Heart left ventricle (tissue), 16 donors: ENCODE measurements at regions of chr11 and their contacts with region 1.

Region 1: GRCh38 chr11:109960831-109961230 is 132.4 kb upstream of the ZC3H12C start:
- DNase-seq: peak; percentile 31 to 77 (median 44)
- ATAC-seq: peak; percentile 85 to 95 (median 88)
- H3K4me3 ChIP-seq: no peak overlapping the region
- H3K27ac ChIP-seq: peak overlapping the region in 2 of 12 donors; percentile 8 to 35
- H3K4me1 ChIP-seq: peaks cover 0 to 10% (median 0%) of the 10 kb centered on the region in 12 donors
- H3K27me3 ChIP-seq: no peaks in the 10 kb centered on the region
- CTCF ChIP-seq: no peak
- POLR2A ChIP-seq: no peak

Region 2: DNA sequence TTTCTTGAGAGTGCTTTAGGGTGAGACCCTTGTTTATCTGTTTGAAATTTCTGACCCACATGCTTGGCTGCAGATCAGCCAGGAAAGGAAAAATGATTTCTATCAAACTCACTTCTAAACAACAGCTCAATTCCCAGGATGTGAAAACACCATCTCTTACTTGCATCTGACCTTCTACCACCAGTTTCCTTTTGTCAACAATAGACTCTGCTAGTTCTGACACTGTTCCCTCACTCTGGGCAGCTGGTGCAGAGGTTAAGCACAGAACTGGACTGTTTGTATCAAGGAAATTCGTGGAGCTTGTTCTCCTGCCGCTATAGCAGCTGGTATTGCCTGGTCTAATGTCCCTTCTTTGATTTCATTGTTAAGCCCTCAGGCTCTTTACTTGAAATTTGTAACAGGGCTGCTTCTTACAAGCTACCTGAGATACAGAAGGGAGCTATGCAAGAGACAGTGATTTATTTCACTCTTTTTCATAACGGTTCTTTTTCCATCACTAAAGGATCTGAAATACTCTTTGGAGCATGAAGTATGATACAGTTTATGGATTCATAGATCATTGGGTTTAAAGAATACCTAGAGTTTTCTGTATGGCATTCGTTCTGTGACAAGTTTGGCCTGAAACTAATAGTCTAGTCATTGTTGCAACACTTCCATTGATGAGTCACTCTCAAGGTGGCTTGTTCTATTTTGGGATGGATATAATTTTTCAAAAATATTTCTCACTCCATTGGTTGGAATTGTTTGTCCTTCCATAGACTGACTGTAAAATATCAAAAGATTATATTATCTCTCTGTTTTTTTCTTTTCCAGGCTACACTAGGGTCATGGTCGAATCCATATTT is 45.8 kb before region 1 on chr11:
- intact Hi-C with region 1: no loop called
- DNase-seq: no peak
- ATAC-seq: no peak
- H3K4me3 ChIP-seq: no peak overlapping the region
- H3K27ac ChIP-seq: no peak overlapping the region
- H3K4me1 ChIP-seq: peaks cover 0 to 3% (median 0%) of the 10 kb centered on the region in 12 donors
- H3K27me3 ChIP-seq: no peaks in the 10 kb centered on the region
- CTCF ChIP-seq: no peak
- POLR2A ChIP-seq: no peak

Region 3: GRCh38 chr11:110074499-110074898 is 113.7 kb after region 1 on chr11:
- intact Hi-C with region 1: no loop called
- DNase-seq: no peak
- ATAC-seq: no peak
- H3K4me3 ChIP-seq: no peak overlapping the region
- H3K27ac ChIP-seq: no peak overlapping the region
- H3K4me1 ChIP-seq: peaks cover 0 to 30% (median 8%) of the 10 kb centered on the region in 12 donors
- H3K27me3 ChIP-seq: no peaks in the 10 kb centered on the region
- CTCF ChIP-seq: no peak
- POLR2A ChIP-seq: no peak

Region 4: DNA sequence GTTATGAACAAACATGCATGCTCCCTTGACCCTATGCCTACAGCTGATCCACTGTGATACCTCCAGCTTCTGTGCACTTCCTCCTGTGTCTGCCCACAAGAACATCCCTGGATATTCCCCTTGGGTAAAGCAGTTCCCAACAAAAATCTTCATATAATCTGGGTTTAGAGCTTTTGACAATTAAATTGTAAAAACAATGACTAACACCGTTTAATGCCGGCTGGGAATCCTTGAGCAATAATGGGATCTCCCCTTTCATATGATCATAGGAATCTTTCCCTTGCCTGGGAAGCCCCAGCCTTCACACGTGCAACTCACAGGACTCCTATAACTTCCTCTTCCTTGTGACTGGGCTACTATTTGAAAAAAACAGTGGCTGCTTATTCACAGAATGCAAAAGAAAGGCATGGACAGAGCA is 126.1 kb after region 1 on chr11:
- intact Hi-C with region 1: loop called in 1 of 10 experiments (anchors 10 kb)
- DNase-seq: no peak
- ATAC-seq: peak in 1 of 4 donors; percentile 49
- H3K4me3 ChIP-seq: no peak overlapping the region
- H3K27ac ChIP-seq: no peak overlapping the region
- H3K4me1 ChIP-seq: peaks cover 0 to 14% (median 1%) of the 10 kb centered on the region in 12 donors
- H3K27me3 ChIP-seq: no peaks in the 10 kb centered on the region
- CTCF ChIP-seq: no peak
- POLR2A ChIP-seq: no peak

Region 5: DNA sequence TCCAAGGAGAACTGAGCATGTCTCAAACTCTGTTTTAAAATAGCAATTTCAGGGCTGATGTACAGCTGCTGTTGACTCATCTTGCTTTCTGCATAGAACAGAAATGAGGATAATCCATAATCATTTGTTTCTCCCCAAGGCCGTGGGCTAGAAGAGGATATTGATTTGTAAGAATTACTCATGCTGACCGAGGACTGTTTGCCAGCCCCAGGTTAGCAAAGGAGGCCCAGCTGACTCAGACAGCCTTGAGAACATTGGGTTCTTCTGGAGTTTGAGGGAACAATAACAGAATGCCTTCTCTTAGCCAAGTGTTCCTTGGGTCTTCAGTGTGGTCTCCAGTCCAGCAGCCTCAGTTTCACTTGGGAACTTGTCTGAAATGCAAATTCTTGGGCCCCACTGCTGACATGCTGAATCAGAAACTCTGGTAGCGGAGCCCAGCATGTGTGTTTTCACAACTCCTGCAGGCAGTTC is 224.3 kb after region 1 on chr11:
- intact Hi-C with region 1: loop called in 1 of 10 experiments (anchors 10 kb)
- DNase-seq: no peak
- ATAC-seq: no peak
- H3K4me3 ChIP-seq: no peak overlapping the region
- H3K27ac ChIP-seq: no peak overlapping the region
- H3K4me1 ChIP-seq: no peaks in the 10 kb centered on the region
- H3K27me3 ChIP-seq: no peaks in the 10 kb centered on the region
- CTCF ChIP-seq: no peak
- POLR2A ChIP-seq: no peak

Region 6: GRCh38 chr11:110782616-110783015 is 821.8 kb after region 1 on chr11:
- intact Hi-C with region 1: no loop called
- DNase-seq: no peak
- ATAC-seq: no peak
- H3K4me3 ChIP-seq: no peak overlapping the region
- H3K27ac ChIP-seq: no peak overlapping the region
- H3K4me1 ChIP-seq: peaks cover 0 to 5% (median 0%) of the 10 kb centered on the region in 12 donors
- H3K27me3 ChIP-seq: no peaks in the 10 kb centered on the region
- CTCF ChIP-seq: no peak
- POLR2A ChIP-seq: no peak